ENCODE measurements at regions of chr3 and their contacts with region 1.

Region 1: GRCh38 chr3:69671082-69671952 is 67.9 kb upstream of the MITF start:
- DNase-seq: peak in 1 of 2 experiments; percentile 49
- H3K4me3 ChIP-seq: no peak overlapping the region
- H3K4me3 Mint-ChIP-seq: no peak overlapping the region
- H3K27ac Mint-ChIP-seq: no peak overlapping the region
- H3K4me1 ChIP-seq: no peaks in the 10 kb centered on the region
- H3K4me1 Mint-ChIP-seq: no peaks in the 10 kb centered on the region
- H3K27me3 ChIP-seq: no peaks in the 10 kb centered on the region; the same call in 1 of the 2 replicates
- H3K27me3 Mint-ChIP-seq: no peaks in the 10 kb centered on the region
- CTCF ChIP-seq: peak; percentile 58 to 67

Region 2: GRCh38 chr3:69120879-69121464 is 550.3 kb before region 1 on chr3:
- CTCF ChIA-PET with region 1: no interaction called
- POLR2A ChIA-PET with region 1: no interaction called
- intact Hi-C with region 1: loop called (anchors 1 kb)
- DNase-seq: peak; percentile 81 to 84
- H3K4me3 ChIP-seq: no peak overlapping the region
- H3K4me3 Mint-ChIP-seq: no peak overlapping the region
- H3K27ac Mint-ChIP-seq: no peak overlapping the region
- H3K4me1 ChIP-seq: peaks cover 8% of the 10 kb centered on the region; the same call in 1 of the 2 replicates
- H3K4me1 Mint-ChIP-seq: no peaks in the 10 kb centered on the region
- H3K27me3 ChIP-seq: no peaks in the 10 kb centered on the region
- H3K27me3 Mint-ChIP-seq: no peaks in the 10 kb centered on the region
- CTCF ChIP-seq: peak; percentile 86 to 92

Region 3: DNA sequence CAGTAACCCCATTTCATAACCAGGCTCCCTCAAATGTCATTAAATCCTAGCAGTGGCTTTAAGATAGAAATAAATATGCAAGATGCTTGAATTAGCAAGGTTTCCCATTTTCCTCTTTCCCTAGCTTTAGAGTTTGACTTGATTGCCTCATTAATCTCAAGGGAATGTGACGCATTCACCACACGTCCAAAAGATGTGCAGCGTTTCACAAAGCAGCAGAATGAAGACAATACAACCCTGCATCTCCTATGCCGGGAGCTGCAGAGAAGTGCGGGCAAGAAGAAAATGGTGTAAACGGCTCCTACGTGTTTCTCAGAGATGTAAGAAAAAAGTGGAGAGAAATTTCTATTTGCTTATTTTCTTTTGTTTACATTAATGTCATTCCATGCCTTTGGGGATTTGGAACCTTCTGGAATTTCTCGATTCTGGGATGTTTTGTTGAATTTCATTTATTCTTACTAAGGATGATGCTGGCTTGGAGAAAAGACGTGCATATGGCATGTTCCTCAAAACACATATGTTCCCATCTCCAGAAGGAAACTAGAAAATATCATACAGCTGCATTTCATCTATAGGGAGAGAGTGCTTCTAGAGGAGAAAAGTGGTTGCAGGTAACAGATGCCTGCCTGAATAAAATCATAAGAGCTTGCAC is 257.6 kb before region 1 on chr3:
- CTCF ChIA-PET with region 1: no interaction called
- POLR2A ChIA-PET with region 1: no interaction called
- intact Hi-C with region 1: no loop called
- DNase-seq: no peak
- H3K4me3 ChIP-seq: no peak overlapping the region
- H3K4me3 Mint-ChIP-seq: no peak overlapping the region
- H3K27ac Mint-ChIP-seq: no peak overlapping the region
- H3K4me1 ChIP-seq: no peaks in the 10 kb centered on the region
- H3K4me1 Mint-ChIP-seq: no peaks in the 10 kb centered on the region
- H3K27me3 ChIP-seq: no peaks in the 10 kb centered on the region
- H3K27me3 Mint-ChIP-seq: no peaks in the 10 kb centered on the region
- CTCF ChIP-seq: no peak

Region 4: DNA sequence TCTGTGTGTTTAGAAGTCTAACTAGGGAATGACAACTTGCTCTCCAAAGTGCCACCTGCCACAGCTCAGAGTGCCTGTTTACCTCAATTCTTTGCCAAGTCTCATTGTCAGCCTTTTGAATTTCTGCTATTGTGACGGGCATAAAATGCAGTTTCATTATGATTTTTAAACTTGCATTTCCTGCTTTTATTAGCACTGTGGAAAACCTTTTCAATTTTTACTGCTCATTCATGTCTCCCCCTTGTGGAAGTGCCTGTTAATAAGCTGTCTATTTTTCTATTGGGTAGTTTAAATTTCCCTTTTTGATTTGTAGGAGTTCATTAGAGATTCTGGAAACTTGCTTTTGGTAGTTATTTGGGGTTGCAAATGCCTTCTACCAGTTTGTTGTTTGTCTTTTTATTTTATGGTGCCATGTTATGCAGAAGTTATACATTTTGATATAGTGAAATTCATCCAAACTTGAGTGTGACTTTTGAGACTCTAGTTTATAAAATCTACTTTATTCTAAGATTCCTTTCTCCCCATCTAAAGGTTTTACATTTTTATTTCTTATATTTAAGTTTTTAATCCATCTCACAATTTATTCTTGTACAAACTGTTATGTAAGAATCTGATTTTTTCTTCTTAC is 231.6 kb before region 1 on chr3:
- CTCF ChIA-PET with region 1: no interaction called
- POLR2A ChIA-PET with region 1: no interaction called
- intact Hi-C with region 1: loop called (anchors 5 kb)
- DNase-seq: no peak
- H3K4me3 ChIP-seq: no peak overlapping the region
- H3K4me3 Mint-ChIP-seq: no peak overlapping the region
- H3K27ac Mint-ChIP-seq: no peak overlapping the region
- H3K4me1 ChIP-seq: peaks cover 17% of the 10 kb centered on the region
- H3K4me1 Mint-ChIP-seq: peaks cover 7% of the 10 kb centered on the region
- H3K27me3 ChIP-seq: no peaks in the 10 kb centered on the region
- H3K27me3 Mint-ChIP-seq: no peaks in the 10 kb centered on the region
- CTCF ChIP-seq: peak; percentile 67 to 73

Region 5: DNA sequence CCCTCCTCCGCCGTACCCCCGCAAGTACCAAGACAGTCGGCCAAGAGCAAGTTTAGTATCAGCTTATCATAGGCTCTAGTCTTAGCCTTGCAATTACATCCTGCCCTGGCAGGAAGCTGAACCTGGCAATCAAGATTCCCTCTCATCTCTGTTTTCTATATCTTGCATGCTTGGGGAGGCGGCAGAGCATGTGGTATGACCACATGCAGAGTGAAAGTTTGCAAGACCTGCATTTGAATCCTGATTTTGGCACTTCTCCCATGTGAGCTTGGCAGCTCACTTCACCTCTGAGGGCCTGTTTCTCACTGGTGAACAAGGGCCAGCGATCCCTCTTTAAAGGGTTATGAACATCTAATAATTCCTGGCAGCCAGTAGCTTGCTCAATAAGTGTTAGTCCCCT is 179.3 kb before region 1 on chr3:
- CTCF ChIA-PET with region 1: no interaction called
- POLR2A ChIA-PET with region 1: no interaction called
- intact Hi-C with region 1: no loop called
- DNase-seq: no peak
- H3K4me3 ChIP-seq: no peak overlapping the region
- H3K4me3 Mint-ChIP-seq: no peak overlapping the region
- H3K27ac Mint-ChIP-seq: no peak overlapping the region
- H3K4me1 ChIP-seq: no peaks in the 10 kb centered on the region
- H3K4me1 Mint-ChIP-seq: no peaks in the 10 kb centered on the region
- H3K27me3 ChIP-seq: no peaks in the 10 kb centered on the region
- H3K27me3 Mint-ChIP-seq: peaks cover 11% of the 10 kb centered on the region
- CTCF ChIP-seq: no peak